ENCODE measurements at regions of chr17 and their contacts with region 1.

Region 1: GRCh38 chr17:55348749-55349354 is 72.8 kb downstream of the MMD start:
- DNase-seq: no peak
- H3K4me3 ChIP-seq: no peak overlapping the region
- CTCF ChIP-seq: peak; percentile 79

Region 2: DNA sequence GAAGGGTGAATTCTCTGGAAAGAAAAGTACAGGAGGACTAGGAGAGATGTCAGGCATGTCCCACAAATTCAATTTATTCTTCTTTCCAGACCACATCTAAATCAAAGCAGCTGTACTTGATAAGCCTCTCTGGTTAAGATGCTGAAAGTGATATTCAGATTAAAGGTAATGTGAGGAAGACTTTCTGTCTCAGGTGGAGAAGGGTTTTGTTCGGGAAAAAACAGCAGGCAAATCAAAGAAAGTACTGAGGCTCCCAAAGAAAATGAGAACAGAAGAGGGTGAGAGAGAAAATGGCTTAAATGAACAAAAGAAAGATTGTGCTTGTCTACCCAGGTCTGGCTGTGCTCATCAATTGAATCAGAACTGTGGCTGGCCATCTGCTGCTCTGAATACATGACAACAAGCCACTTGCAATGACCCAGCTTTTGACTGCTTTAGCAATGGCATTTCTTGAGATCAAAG is 17.2 kb after region 1 on chr17:
- CTCF ChIA-PET with region 1: interaction called, 14 read pairs
- POLR2A ChIA-PET with region 1: no interaction called
- DNase-seq: no peak
- H3K4me3 ChIP-seq: no peak overlapping the region
- CTCF ChIP-seq: no peak

Region 3: GRCh38 chr17:55421179-55421934 is 72.5 kb after region 1 on chr17 and contains the start of gene MMD:
- CTCF ChIA-PET with region 1: no interaction called
- POLR2A ChIA-PET with region 1: no interaction called
- DNase-seq: no peak
- H3K4me3 ChIP-seq: peak within 1 kb of the TSS; percentile 83
- CTCF ChIP-seq: no peak

Measured in AG04449 (cell line).